WTC11 (cell line): ENCODE measurements at regions of chr5 and their contacts with region 1.

Region 1: GRCh38 chr5:155004138-155004744 is 9.3 kb upstream of the KIF4B start:
- DNase-seq: peak; percentile 69
- ATAC-seq: peak; percentile 96
- H3K4me3 Mint-ChIP-seq: no peak overlapping the region
- H3K27ac Mint-ChIP-seq: no peak overlapping the region
- H3K4me1 Mint-ChIP-seq: 0 out of 2 replicates have a peak, but pooled peaks cover 7% of the 10 kb centered on the region
- H3K27me3 Mint-ChIP-seq: no peaks in the 10 kb centered on the region; the same call in none of the 2 replicates
- CTCF ChIP-seq: no peak

Region 2: GRCh38 chr5:154962494-154962893 is 41.7 kb before region 1 on chr5:
- CTCF ChIA-PET with region 1: interaction called, 6 read pairs
- POLR2A ChIA-PET with region 1: interaction called, 11 read pairs
- DNase-seq: no peak
- ATAC-seq: no peak
- H3K4me3 Mint-ChIP-seq: no peak overlapping the region
- H3K27ac Mint-ChIP-seq: no peak overlapping the region
- H3K4me1 Mint-ChIP-seq: no peaks in the 10 kb centered on the region
- H3K27me3 Mint-ChIP-seq: no peaks in the 10 kb centered on the region
- CTCF ChIP-seq: no peak

Region 3: DNA sequence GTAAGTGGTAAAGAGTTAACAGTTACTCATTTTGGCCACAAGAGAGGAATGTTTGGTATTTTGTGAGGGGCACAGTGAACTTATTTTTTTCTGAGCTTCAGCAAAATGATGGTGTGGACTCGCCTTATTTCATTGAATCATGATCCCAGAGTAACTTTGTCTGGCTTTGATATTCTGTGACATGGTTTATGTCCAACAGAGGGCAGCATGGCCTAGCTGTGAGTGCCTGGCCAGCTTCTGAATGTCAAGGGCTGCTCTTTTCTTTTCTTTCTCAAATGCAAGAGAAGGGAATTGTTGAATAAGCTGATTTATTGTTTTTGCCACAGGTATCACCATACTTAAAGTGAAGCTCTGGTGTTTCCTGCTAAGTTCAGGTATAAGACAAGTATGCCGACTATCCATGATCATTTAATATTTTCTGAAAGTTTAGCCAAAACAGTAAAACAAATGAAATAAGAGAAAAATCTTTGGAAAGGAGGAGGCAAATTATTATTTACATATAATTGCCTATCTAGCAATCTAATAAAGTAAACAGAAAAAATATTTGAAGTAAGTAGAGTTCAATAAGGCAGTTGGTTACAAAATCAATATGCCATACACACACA is 31.7 kb before region 1 on chr5:
- CTCF ChIA-PET with region 1: interaction called, 49 read pairs
- POLR2A ChIA-PET with region 1: no interaction called
- DNase-seq: peak; percentile 32
- ATAC-seq: peak; percentile 75
- H3K4me3 Mint-ChIP-seq: no peak overlapping the region
- H3K27ac Mint-ChIP-seq: no peak overlapping the region
- H3K4me1 Mint-ChIP-seq: no peaks in the 10 kb centered on the region
- H3K27me3 Mint-ChIP-seq: no peaks in the 10 kb centered on the region
- CTCF ChIP-seq: peak; percentile 34; the same call in 1 of the 2 replicates

Region 4: DNA sequence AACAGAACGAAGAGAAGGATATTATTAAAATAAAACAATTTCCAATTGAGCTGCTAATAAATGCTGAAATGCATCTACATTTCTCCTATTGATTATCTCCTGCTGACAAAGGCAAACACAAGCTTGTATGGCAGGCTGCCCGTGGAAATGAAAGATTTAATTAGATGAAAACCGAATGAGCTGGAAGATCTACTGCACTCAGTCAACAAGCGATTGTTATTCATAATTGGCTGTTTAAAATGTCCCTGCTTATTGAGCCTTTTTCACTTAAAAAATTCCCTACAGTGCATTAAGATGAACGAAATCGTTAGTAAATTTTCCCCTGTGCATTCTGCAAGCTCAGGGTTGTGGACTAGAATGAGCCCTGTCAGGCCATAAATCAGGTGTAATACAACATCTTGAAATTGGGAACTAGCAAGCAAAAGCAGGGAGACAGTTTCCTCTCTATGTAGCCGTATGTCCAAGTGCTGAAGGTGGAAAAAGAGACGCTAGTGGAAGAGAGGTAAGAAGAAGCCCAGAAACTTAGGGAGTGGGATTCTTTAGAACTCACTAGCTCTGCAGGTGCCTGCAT is 19.2 kb before region 1 on chr5:
- CTCF ChIA-PET with region 1: interaction called, 26 read pairs
- POLR2A ChIA-PET with region 1: interaction called, 4 read pairs
- DNase-seq: no peak
- ATAC-seq: no peak
- H3K4me3 Mint-ChIP-seq: no peak overlapping the region
- H3K27ac Mint-ChIP-seq: no peak overlapping the region
- H3K4me1 Mint-ChIP-seq: peaks cover 8% of the 10 kb centered on the region
- H3K27me3 Mint-ChIP-seq: no peaks in the 10 kb centered on the region
- CTCF ChIP-seq: no peak

Region 5: GRCh38 chr5:155017610-155018009 is 13.4 kb after region 1 on chr5:
- CTCF ChIA-PET with region 1: interaction called, 22 read pairs
- POLR2A ChIA-PET with region 1: no interaction called
- DNase-seq: no peak
- ATAC-seq: no peak
- H3K4me3 Mint-ChIP-seq: no peak overlapping the region
- H3K27ac Mint-ChIP-seq: no peak overlapping the region
- H3K4me1 Mint-ChIP-seq: no peaks in the 10 kb centered on the region
- H3K27me3 Mint-ChIP-seq: peaks cover 16% of the 10 kb centered on the region
- CTCF ChIP-seq: no peak